Activated CD8-positive, alpha-beta T cell treated with anti-CD3 and anti-CD28 coated beads, Interleukin-2, amount 10 ng/mL, durations not matched to agents 7 days and 5 days (primary cell): ENCODE measurements at regions of chr9 and their contacts with region 1.

Region 1: DNA sequence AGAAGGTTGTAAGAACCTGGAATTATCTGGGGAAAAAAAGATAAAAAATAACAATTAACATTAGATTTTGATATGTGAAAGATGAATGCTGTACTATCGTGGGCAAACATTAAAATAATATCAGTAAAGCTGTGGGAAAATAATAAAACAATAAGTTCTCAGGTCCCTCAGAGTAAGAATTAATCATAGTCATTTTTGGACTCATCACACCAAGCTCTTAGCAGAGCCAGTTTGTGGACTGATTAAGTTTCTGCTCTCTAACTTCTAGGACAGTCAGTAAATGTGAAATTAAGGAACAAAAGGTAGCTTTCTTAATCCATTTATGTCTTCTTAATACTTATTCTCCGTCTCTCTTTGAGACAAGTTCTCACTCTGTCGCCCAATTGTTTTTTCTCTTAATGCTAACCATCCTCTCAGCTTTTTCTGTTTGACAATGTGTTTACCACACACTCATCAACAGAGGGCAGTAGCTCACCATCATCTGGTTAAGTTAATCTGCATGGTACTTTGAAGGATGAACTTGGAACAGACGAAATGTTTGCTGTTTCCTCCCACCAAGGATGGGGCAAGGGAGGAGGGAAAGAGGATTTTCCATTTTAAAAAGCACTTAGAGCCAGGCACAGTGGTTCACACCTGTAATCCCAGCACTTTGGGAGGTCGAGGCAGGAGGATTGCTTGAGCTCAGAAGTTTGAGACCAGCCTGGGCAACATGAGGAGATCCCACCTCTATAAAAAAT is 5.3 kb upstream of the ACO1 start:
- DNase-seq: peak; percentile 70
- ATAC-seq: peak; percentile 76
- H3K4me3 Mint-ChIP-seq: no peak overlapping the region
- H3K27ac Mint-ChIP-seq: no peak overlapping the region
- H3K4me1 Mint-ChIP-seq: peaks cover 14% of the 10 kb centered on the region
- H3K27me3 Mint-ChIP-seq: peaks cover 34% of the 10 kb centered on the region

Region 2: DNA sequence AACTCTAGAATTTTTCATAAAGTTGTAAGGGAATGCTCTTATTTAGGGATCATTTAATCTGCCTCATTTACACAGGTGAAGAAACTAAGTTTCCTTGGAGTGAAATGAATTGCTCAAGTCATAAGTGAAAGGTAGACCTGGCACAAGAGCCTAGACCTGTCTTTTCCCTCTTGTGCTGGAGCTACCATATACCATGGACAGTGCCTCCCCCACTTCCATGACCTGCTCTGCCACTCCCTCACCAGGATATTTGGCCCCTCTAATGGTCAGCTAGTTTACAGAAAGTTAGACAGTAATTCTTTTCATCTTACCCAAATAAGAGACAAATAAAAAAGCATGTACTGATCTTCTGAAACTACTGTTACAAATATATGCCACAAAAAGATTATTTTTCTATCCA is 100.2 kb before region 1 on chr9:
- CTCF ChIA-PET with region 1: no interaction called
- POLR2A ChIA-PET with region 1: no interaction called
- DNase-seq: no peak
- ATAC-seq: no peak
- H3K4me3 Mint-ChIP-seq: no peak overlapping the region
- H3K27ac Mint-ChIP-seq: no peak overlapping the region
- H3K4me1 Mint-ChIP-seq: no peaks in the 10 kb centered on the region
- H3K27me3 Mint-ChIP-seq: no peaks in the 10 kb centered on the region

Region 3: DNA sequence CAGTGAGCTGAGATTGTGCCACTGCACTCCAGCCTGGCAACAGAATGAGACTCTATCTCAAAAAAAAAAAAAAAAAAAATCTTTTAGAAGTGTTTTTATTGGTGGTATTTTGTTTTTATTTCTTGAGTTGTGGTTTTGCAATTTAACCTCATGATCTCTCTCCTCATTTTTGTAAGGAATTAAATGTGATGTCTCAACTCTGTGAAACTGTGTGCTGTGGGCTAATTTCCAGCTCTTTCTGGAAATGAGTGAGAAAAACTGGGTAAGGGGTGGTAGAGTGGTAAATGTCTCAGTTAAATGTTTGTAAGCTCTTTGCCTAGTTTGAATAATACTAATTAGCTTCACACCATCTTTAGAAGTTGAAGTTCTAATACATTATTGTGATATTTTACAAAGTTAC is 34.3 kb after region 1 on chr9:
- CTCF ChIA-PET with region 1: interaction called, 12 read pairs
- POLR2A ChIA-PET with region 1: no interaction called
- DNase-seq: no peak
- ATAC-seq: no peak
- H3K4me3 Mint-ChIP-seq: no peak overlapping the region
- H3K27ac Mint-ChIP-seq: no peak overlapping the region
- H3K4me1 Mint-ChIP-seq: no peaks in the 10 kb centered on the region
- H3K27me3 Mint-ChIP-seq: no peaks in the 10 kb centered on the region

Region 4: DNA sequence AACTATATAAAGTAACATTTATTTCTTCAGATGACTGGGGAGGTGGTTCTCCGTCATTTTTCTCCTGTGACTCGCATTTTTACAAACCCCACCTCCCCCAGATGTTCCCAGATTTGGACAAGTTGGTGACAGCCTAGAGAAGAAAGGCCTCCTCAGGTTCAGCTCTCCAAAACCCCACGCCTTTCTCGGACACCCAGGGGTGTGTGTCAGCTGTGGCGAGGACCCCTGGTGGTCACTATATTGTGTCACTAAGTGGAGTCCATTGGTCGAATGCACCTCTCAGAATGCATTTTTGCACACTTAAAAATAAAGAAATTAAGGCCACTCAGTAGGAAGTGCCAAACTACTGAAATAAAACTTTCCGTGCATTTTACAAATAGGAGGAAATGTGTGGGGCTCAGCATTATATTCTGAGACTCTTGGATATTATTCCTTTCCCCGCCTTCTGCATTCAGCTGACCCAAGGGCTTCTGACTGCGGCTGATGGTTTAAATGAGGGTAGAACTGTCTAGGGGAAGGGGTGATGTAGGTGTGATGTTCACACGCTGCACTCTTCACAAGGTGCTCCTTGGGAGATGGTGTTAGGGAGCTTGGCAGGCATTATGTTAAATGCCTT is 52.9 kb after region 1 on chr9:
- CTCF ChIA-PET with region 1: interaction called, 68 read pairs
- POLR2A ChIA-PET with region 1: no interaction called
- DNase-seq: peak; percentile 40
- ATAC-seq: no peak
- H3K4me3 Mint-ChIP-seq: no peak overlapping the region
- H3K27ac Mint-ChIP-seq: no peak overlapping the region
- H3K4me1 Mint-ChIP-seq: peaks cover 4% of the 10 kb centered on the region
- H3K27me3 Mint-ChIP-seq: no peaks in the 10 kb centered on the region

Region 5: GRCh38 chr9:32526041-32526706 is 147.0 kb after region 1 on chr9 and contains the start of gene RIGI:
- CTCF ChIA-PET with region 1: interaction called, 53 read pairs
- POLR2A ChIA-PET with region 1: interaction called, 6 read pairs
- DNase-seq: peak; percentile 86
- ATAC-seq: peak; percentile 81
- H3K4me3 Mint-ChIP-seq: peak within 1 kb of the TSS; percentile 98
- H3K27ac Mint-ChIP-seq: peak within 1 kb of the TSS; percentile 96
- H3K4me1 Mint-ChIP-seq: peaks cover 57% of the 10 kb centered on the region
- H3K27me3 Mint-ChIP-seq: no peaks in the 10 kb centered on the region
- total RNA-seq, gene RIGI: 19.2 to 19.6 TPM

Region 6: DNA sequence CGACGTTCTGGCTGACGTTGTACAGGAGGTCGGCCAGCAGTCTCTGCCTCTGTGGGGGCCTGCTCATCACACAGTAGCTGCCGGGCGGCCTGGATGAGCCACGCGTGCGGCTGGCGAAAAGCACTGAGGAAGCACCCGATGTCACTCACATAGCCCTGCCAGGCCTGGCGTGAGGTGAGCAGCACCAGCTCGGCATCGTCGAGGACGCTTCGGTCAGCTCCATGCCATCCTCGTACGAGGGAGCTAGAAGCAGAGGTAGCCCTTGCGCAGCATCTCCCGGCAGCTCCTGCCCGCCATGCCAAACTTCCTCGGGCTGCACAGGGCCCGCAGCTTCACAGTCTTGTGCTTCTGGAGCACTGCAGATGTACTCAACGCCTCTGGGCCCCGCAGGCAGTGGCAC is 187.6 kb after region 1 on chr9:
- CTCF ChIA-PET with region 1: interaction called, 608 read pairs
- POLR2A ChIA-PET with region 1: interaction called, 3 read pairs
- DNase-seq: no peak
- ATAC-seq: no peak
- H3K4me3 Mint-ChIP-seq: no peak overlapping the region
- H3K27ac Mint-ChIP-seq: no peak overlapping the region
- H3K4me1 Mint-ChIP-seq: peaks cover 25% of the 10 kb centered on the region
- H3K27me3 Mint-ChIP-seq: no peaks in the 10 kb centered on the region

Region 7: GRCh38 chr9:32968101-32969011 is 589.2 kb after region 1 on chr9:
- CTCF ChIA-PET with region 1: interaction called, 32 read pairs
- POLR2A ChIA-PET with region 1: no interaction called
- DNase-seq: peak; percentile 69
- ATAC-seq: no peak
- H3K4me3 Mint-ChIP-seq: no peak overlapping the region
- H3K27ac Mint-ChIP-seq: no peak overlapping the region
- H3K4me1 Mint-ChIP-seq: no peaks in the 10 kb centered on the region
- H3K27me3 Mint-ChIP-seq: no peaks in the 10 kb centered on the region